Common myeloid progenitor, CD34-positive (primary cell): ENCODE measurements at regions of chr21 and their contacts with region 1.

Region 1: GRCh38 chr21:44801468-44802395 is at the start of gene UBE2G2:
- DNase-seq: peak; percentile 75 to 88 (median 82)
- H3K4me3 ChIP-seq: peak within 1 kb of the TSS; percentile 63 to 96 (median 81)
- H3K27ac ChIP-seq: peak within 1 kb of the TSS; percentile 27 to 79
- H3K4me1 ChIP-seq: peaks cover 8 to 28% (median 28%) of the 10 kb centered on the region in 4 experiments
- H3K27me3 ChIP-seq: no peaks in the 10 kb centered on the region

Region 2: GRCh38 chr21:44510508-44511210 is 291.1 kb before region 1 on chr21:
- CTCF ChIA-PET with region 1: interaction called, 10 read pairs
- POLR2A ChIA-PET with region 1: no interaction called
- DNase-seq: peak; percentile 62 to 74 (median 73)
- H3K4me3 ChIP-seq: peak overlapping the region in 6 of 7 experiments; percentile 10 to 79 (median 55)
- H3K27ac ChIP-seq: no peak overlapping the region
- H3K4me1 ChIP-seq: peaks cover 0 to 15% (median 8%) of the 10 kb centered on the region in 4 experiments
- H3K27me3 ChIP-seq: no peaks in the 10 kb centered on the region

Region 3: DNA sequence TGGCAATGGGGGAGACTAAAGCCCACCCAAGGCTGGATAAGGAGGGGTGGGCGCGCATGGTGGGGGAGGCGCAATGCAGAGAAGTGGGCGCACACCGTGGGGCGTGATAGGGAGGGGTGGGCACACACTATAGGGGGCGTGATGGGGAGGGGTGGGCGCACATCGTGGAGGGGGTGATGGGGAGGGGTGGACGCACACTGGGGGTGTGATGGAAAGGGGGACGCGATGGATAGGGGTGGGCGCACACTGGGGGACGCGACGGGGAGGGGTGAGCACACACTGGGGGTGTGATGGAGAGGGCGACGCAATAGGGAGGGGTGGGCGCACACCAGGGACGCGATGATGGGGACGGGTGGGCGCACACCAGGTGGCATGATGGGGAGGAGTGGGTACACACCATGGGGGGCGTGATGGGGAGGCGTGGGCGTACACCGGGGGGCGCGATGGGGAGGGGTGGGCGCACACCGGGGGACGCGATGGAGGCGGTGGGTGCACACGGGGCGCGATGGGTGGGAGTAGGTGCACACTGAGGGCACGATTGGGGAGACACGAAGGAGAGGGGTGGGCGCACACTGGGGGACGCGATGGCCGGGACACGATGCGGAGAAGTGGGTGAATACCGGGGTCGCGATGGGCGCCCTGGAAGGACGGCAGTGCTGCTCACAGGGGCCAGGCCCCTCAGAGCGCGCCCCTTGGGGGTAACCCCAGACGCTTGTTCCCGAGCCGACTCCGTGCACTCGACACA is 15.2 kb after region 1 on chr21:
- CTCF ChIA-PET with region 1: interaction called, 10 read pairs
- POLR2A ChIA-PET with region 1: interaction called, 3 read pairs
- DNase-seq: no peak
- H3K4me3 ChIP-seq: peak overlapping the region; percentile 52 to 81 (median 73)
- H3K27ac ChIP-seq: peak overlapping the region in 1 of 2 experiments; percentile 49
- H3K4me1 ChIP-seq: peaks cover 0 to 20% (median 15%) of the 10 kb centered on the region in 4 experiments
- H3K27me3 ChIP-seq: no peaks in the 10 kb centered on the region

Region 4: GRCh38 chr21:44829507-44830092 is 27.9 kb after region 1 on chr21:
- CTCF ChIA-PET with region 1: no interaction called
- POLR2A ChIA-PET with region 1: no interaction called
- DNase-seq: no peak
- H3K4me3 ChIP-seq: no peak overlapping the region
- H3K27ac ChIP-seq: no peak overlapping the region
- H3K4me1 ChIP-seq: peaks cover 3 to 25% (median 10%) of the 10 kb centered on the region in 4 experiments
- H3K27me3 ChIP-seq: no peaks in the 10 kb centered on the region

Region 5: GRCh38 chr21:44873356-44874239 is 71.9 kb after region 1 on chr21 and contains the start of gene PTTG1IP:
- CTCF ChIA-PET with region 1: interaction called, 11 read pairs
- POLR2A ChIA-PET with region 1: interaction called, 3 read pairs
- DNase-seq: peak; percentile 97 to 98 (median 98)
- H3K4me3 ChIP-seq: peak within 1 kb of the TSS; percentile 67 to 96 (median 87)
- H3K27ac ChIP-seq: peak within 1 kb of the TSS; percentile 64 to 87
- H3K4me1 ChIP-seq: peaks cover 40 to 88% (median 74%) of the 10 kb centered on the region in 4 experiments
- H3K27me3 ChIP-seq: no peaks in the 10 kb centered on the region

Region 6: DNA sequence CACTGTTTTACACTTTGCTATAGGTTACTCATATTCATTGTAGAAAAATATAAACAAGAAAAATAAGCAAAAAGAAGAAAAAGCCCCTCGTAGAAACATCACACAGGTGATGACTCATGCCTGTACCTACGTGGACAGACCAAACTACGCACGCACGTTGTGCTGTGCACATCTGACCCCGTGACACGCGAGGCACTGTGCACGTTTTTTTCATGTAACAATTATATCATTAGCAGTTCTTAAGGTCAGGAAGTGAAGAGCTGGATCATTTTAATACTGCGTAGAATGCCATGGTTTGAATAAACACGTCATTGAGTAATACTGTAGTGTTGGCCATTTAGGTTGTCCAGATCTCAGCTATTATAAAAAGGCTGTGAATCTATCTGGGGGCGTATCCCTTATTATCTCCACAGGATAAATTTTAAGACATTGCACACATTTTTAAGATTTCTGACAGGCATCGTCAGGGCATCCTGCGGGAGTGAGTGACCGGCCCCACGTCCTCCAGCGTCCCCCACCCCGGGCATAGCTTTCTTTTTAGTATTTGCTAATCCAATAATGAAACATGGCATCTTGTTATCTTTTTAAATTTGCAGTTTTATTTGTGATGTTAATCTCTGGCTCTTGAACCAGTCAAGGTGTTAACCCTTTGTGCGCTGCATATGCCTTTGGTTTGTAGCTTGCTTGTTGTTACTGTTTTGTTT is 249.2 kb after region 1 on chr21:
- CTCF ChIA-PET with region 1: no interaction called
- POLR2A ChIA-PET with region 1: no interaction called
- DNase-seq: no peak
- H3K4me3 ChIP-seq: no peak overlapping the region
- H3K27ac ChIP-seq: no peak overlapping the region
- H3K4me1 ChIP-seq: no peaks in the 10 kb centered on the region
- H3K27me3 ChIP-seq: peaks cover under 1 to 15% (median 8%) of the 10 kb centered on the region in 5 experiments